Naive thymus-derived CD8-positive, alpha-beta T cell (primary cell): ENCODE measurements at regions of chr16 and their contacts with region 1.

Region 1: GRCh38 chr16:88650749-88651275 is at the start of gene CYBA:
- DNase-seq: peak; percentile 71 to 89 (median 80)
- ATAC-seq: peak; percentile 88
- H3K4me3 Mint-ChIP-seq: peak within 1 kb of the TSS; percentile 82 to 96 (median 90)
- H3K27ac Mint-ChIP-seq: peak within 1 kb of the TSS; percentile 82 to 96 (median 93)
- H3K4me1 Mint-ChIP-seq: peaks cover 8 to 42% (median 27%) of the 10 kb centered on the region in 4 donors
- H3K27me3 Mint-ChIP-seq: no peaks in the 10 kb centered on the region
- polyA plus RNA-seq, gene CYBA: 625 to 787 (median 649) TPM

Region 2: GRCh38 chr16:88639231-88640038 is 11.4 kb before region 1 on chr16:
- POLR2A ChIA-PET with region 1: interaction called, 48 read pairs
- DNase-seq: no peak
- ATAC-seq: peak in 1 of 2 donors; percentile 30
- H3K4me3 Mint-ChIP-seq: peak overlapping the region in 4 of 10 donors; percentile 26 to 64 (median 46)
- H3K27ac Mint-ChIP-seq: peak overlapping the region in 2 of 10 donors; percentile 52
- H3K4me1 Mint-ChIP-seq: peaks cover 19 to 60% (median 56%) of the 10 kb centered on the region in 4 donors
- H3K27me3 Mint-ChIP-seq: peaks cover 0 to 10% (median 3%) of the 10 kb centered on the region in 5 donors

Region 3: GRCh38 chr16:88662843-88663606 is 12.2 kb after region 1 on chr16 and contains the start of gene MVD:
- POLR2A ChIA-PET with region 1: interaction called, 15 read pairs
- DNase-seq: peak; percentile 90 to 98 (median 94)
- ATAC-seq: peak; percentile 97
- H3K4me3 Mint-ChIP-seq: peak within 1 kb of the TSS; percentile 90 to 97 (median 94)
- H3K27ac Mint-ChIP-seq: peak within 1 kb of the TSS; percentile 58 to 98 (median 96)
- H3K4me1 Mint-ChIP-seq: peaks cover 5 to 31% (median 18%) of the 10 kb centered on the region in 4 donors
- H3K27me3 Mint-ChIP-seq: peaks cover 0 to 2% (median 0%) of the 10 kb centered on the region in 5 donors
- polyA plus RNA-seq, gene MVD: 14.4 to 20.4 (median 18.5) TPM